Vagina (tissue), 2 donors: ENCODE measurements at regions of chr18 and their contacts with region 1.

Region 1: DNA sequence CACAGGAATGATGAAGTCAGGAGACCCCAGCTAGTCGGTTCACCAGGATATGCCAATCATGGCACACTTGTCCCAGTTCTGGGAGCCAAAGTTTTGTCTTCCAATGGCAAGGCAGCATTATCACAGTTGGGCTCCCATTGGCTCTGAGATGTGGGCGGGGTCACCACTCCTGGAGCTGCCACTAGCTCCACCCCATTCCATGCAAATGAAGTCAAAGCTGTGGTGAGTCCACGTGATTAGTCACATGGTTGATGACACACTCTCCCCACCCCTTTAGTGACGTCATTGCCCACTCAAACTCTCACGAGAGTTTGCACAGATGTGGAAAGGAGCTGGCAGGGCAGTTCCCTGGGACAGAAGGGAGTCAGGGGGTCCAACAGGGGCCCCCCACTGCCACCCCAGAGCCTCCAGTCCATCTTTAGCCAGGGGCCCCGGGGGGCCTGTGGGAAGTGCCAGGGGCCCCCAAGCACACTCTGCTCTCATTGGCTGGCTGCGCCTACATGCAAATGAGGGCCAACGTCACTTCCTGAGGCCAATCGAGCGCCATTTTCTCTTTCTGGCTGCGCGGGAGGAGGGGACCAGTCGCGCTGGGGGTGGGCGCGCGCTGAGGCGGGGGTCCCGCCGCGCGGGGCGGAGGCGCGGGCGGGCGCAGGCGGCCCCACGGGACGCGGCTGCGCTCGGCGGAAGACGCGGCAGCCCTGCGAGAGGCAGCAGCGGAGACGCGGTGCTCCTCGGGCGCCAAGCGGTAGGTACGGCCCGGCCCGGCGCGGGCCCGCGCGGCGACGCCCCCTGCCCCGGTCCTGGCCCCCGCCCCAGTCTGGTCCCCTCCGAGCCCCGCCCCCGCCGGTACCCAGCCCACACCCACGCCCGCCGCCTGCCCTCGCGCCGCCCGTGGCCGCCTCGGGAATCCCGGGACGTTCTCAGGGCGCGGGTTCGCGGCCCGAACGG is at the start of gene ADNP2:
- DNase-seq: no peak
- H3K4me3 ChIP-seq: peak within 1 kb of the TSS; percentile 62 to 92
- H3K27ac ChIP-seq: peak within 1 kb of the TSS; percentile 83
- H3K4me1 ChIP-seq: peaks cover 22% of the 10 kb centered on the region
- H3K27me3 ChIP-seq: no peaks in the 10 kb centered on the region
- CTCF ChIP-seq: no peak
- POLR2A ChIP-seq: peak in 1 of 2 donors; percentile 45
- total RNA-seq, gene ADNP2: 21.4 TPM

Region 2: GRCh38 chr18:80034068-80034851 is 74.7 kb before region 1 on chr18 and contains the start of gene RBFA:
- intact Hi-C with region 1: loop called (anchors 10 kb)
- DNase-seq: peak; percentile 98 to 100
- H3K4me3 ChIP-seq: peak within 1 kb of the TSS; percentile 74
- H3K27ac ChIP-seq: peak within 1 kb of the TSS; percentile 80
- H3K4me1 ChIP-seq: peaks cover 17% of the 10 kb centered on the region
- H3K27me3 ChIP-seq: no peaks in the 10 kb centered on the region
- CTCF ChIP-seq: peak; percentile 20 to 46 (median 27)
- POLR2A ChIP-seq: peak in 1 of 2 donors; percentile 18
- total RNA-seq, gene RBFA: 30.2 TPM

Region 3: DNA sequence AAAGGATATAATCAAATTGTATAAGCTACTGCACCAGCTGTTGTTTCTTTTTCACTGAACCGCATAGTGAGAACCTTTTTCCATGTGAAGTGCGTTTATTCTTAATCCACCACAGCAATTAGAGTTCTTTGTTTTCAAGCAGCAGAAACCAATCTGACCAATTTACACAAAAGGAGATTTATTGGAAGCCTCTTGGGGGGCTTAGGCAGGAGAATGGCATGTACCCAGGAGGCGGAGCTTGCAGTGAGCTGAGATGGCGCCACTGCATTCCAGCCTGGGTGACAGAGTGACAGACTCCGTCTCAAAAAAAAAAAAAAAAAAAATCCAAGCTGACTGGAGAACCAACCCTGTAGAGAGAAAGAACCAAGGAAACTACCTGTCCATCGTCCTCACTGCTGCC is 10.1 kb after region 1 on chr18:
- intact Hi-C with region 1: no loop called
- DNase-seq: no peak
- H3K4me3 ChIP-seq: no peak overlapping the region
- H3K27ac ChIP-seq: no peak overlapping the region
- H3K4me1 ChIP-seq: no peaks in the 10 kb centered on the region
- H3K27me3 ChIP-seq: no peaks in the 10 kb centered on the region
- CTCF ChIP-seq: no peak
- POLR2A ChIP-seq: no peak

Region 4: DNA sequence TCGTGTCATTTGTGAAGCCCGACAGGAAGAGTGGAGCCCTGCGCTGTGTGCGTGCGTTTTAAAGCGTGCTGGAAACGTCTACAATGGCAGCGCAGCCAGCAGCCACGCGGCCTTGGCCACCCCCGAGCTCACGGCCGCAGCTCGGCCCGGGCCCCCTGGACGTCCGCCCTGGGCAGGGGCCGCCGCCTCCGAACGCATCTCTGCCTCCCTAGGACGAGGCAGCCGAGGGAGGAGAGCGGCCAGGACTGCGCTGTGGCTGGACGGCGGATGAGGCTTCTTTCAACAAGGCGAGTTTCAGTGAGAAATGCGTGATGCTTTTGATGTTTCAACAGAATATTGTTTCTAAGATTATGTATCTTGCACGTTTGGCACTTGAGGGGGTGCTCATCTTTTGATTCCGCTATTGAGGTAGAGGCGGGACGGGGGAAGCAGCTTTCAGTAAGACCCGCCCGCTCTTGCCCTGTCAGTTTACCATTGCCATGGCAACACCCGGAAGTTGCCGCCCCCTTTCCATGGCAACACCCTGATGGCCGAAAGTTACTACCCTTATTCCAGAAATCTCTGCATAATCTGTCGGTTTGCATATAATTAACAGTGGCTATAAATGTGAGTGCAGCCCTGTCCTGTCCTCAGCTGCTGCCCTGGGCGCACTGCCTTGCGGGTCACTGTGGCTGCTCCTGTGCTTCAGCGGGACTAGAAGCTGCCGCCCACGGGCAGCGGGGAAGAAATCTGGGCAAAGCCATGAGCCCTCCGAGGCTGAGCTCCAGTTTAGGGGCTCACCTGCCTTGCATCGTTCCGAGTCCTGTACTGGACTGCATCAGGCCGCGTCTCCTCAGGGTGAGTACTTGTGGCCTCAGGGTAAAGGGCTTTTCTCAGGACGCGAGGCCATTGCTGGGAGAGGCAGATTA is 38.7 kb after region 1 on chr18:
- intact Hi-C with region 1: no loop called
- DNase-seq: no peak
- H3K4me3 ChIP-seq: peak overlapping the region; percentile 56 to 67
- H3K27ac ChIP-seq: peak overlapping the region; percentile 51
- H3K4me1 ChIP-seq: peaks cover 6% of the 10 kb centered on the region
- H3K27me3 ChIP-seq: no peaks in the 10 kb centered on the region
- CTCF ChIP-seq: no peak
- POLR2A ChIP-seq: no peak